GM12878 (cell line): ENCODE measurements at regions of chr11 and their contacts with region 1.

Region 1: DNA sequence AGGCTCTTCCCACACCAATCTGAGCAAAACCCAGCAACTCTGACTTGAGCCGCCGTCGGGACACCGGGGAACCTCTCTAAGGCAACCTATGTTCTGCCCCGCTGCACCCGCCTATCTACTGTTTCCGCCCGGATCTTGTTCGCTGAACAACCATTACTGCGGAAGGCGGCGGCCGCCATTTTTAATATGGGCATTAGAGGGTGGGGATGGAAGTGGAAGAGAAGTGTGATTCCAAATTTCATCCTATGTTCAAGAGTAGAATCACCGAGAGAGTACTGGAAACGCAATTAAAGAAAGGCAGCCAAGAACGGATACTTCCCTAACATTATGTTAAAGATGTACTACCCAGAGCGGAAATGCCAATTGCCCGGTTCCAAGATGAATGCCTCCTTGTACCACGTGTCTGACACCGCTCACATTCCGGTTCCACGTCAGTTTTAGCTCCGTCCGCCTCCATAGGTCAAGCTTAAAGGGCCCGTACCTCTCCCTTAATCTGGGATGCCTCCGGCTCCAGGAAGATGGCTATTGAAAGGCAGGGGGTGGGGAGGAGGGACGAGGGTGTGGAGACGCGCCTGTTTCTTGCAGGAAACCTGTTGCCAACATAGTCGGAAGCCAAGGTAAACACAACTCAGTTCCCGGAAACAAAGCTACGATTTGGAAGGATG is at the start of gene DPAGT1:
- DNase-seq: peak; percentile 92
- ATAC-seq: peak; percentile 91
- H3K4me3 ChIP-seq: peak within 1 kb of the TSS; percentile 97
- H3K27ac ChIP-seq: peak within 1 kb of the TSS; percentile 96
- H3K4me1 ChIP-seq: peaks cover 27% of the 10 kb centered on the region
- H3K27me3 ChIP-seq: no peaks in the 10 kb centered on the region
- CTCF ChIP-seq: no peak
- EP300 ChIP-seq: no peak
- POLR2A ChIP-seq: peak; percentile 59; the same call in 1 of the 2 replicates
- RAD21 ChIP-seq: no peak
- polyA plus RNA-seq, gene DPAGT1: 33.0 to 47.8 TPM

Region 2: DNA sequence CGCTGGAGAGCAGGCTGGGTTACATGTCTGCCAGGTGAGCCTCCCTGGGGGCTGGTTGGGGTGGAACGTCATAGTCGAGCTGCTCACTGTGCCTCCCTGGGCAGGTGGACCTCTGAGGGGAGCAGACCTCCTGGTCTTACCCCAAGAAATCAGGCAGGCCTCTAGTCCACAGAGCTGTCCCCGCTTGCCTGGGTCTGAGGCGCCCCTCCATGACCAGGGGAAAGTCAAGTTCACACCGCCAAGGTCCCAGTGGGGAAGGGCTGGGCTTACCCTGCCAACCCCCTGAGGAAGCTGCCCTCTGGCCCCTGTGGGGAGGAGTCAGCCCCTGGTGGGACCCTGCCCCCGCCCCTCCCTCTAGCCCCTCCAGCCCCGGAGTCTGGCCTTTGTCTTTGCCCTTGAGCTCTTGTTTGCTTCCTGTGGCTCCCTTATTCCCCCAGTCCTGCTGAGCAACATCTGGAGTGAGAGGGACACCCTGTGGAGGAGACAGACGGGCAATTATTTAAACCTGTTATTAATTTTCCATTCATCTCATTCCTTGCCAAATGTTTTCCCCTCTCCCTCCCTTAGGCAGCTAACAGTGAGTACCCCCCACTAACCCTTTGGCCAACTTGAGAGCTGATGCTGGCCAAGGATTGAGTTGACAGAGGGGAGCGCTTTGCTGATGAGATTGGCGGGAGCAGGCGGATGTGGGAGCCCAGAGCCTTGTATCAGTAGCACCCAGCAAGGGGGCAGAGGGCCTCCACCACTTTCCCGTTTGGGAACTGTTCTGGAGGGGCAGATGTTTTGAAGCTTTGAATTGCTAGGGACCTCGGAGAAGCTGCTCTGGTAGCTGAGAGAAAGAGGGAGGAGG is 1690.8 kb before region 1 on chr11:
- CTCF ChIA-PET with region 1: no interaction called
- POLR2A ChIA-PET with region 1: interaction called, 11 read pairs
- RAD21 ChIA-PET with region 1: no interaction called
- SMC1A ChIA-PET with region 1: no interaction called
- in situ Hi-C with region 1: no loop called
- intact Hi-C with region 1: no loop called
- DNase-seq: no peak
- ATAC-seq: no peak
- H3K4me3 ChIP-seq: no peak overlapping the region
- H3K27ac ChIP-seq: no peak overlapping the region
- H3K4me1 ChIP-seq: peaks cover 4% of the 10 kb centered on the region; the same call in 1 of the 2 replicates
- H3K27me3 ChIP-seq: no peaks in the 10 kb centered on the region
- CTCF ChIP-seq: no peak
- EP300 ChIP-seq: no peak
- POLR2A ChIP-seq: no peak
- RAD21 ChIP-seq: 0 out of 2 replicates have a peak, but pooled peaks have one; percentile 3

Region 3: GRCh38 chr11:118988280-118988679 is 113.6 kb before region 1 on chr11:
- CTCF ChIA-PET with region 1: no interaction called
- POLR2A ChIA-PET with region 1: no interaction called
- RAD21 ChIA-PET with region 1: no interaction called
- SMC1A ChIA-PET with region 1: no interaction called
- in situ Hi-C with region 1: no loop called
- intact Hi-C with region 1: no loop called
- DNase-seq: no peak
- ATAC-seq: no peak
- H3K4me3 ChIP-seq: no peak overlapping the region
- H3K27ac ChIP-seq: no peak overlapping the region
- H3K4me1 ChIP-seq: no peaks in the 10 kb centered on the region
- H3K27me3 ChIP-seq: no peaks in the 10 kb centered on the region; a peak in 1 of 4 replicates
- CTCF ChIP-seq: no peak
- EP300 ChIP-seq: no peak
- POLR2A ChIP-seq: no peak
- RAD21 ChIP-seq: no peak

Region 4: GRCh38 chr11:119018074-119018938 is 83.6 kb before region 1 on chr11 and contains the starts of genes RPS25 and TRAPPC4:
- CTCF ChIA-PET with region 1: no interaction called
- POLR2A ChIA-PET with region 1: interaction called, 4 read pairs
- RAD21 ChIA-PET with region 1: no interaction called
- SMC1A ChIA-PET with region 1: interaction called, 4 read pairs
- in situ Hi-C with region 1: no loop called
- intact Hi-C with region 1: loop called (anchors 5 kb)
- DNase-seq: peak; percentile 92
- ATAC-seq: peak; percentile 92
- H3K4me3 ChIP-seq: peak within 1 kb of the TSS; percentile 96
- H3K27ac ChIP-seq: peak within 1 kb of the TSS; percentile 82
- H3K4me1 ChIP-seq: no peaks in the 10 kb centered on the region; the same call in 1 of the 2 replicates
- H3K27me3 ChIP-seq: no peaks in the 10 kb centered on the region
- CTCF ChIP-seq: no peak
- EP300 ChIP-seq: no peak; a peak in 1 of 4 replicates
- POLR2A ChIP-seq: peak; percentile 95
- RAD21 ChIP-seq: no peak
- polyA plus RNA-seq, gene RPS25: 3,292 to 3,419 TPM
- polyA plus RNA-seq, gene TRAPPC4: 205 to 231 TPM

Region 5: DNA sequence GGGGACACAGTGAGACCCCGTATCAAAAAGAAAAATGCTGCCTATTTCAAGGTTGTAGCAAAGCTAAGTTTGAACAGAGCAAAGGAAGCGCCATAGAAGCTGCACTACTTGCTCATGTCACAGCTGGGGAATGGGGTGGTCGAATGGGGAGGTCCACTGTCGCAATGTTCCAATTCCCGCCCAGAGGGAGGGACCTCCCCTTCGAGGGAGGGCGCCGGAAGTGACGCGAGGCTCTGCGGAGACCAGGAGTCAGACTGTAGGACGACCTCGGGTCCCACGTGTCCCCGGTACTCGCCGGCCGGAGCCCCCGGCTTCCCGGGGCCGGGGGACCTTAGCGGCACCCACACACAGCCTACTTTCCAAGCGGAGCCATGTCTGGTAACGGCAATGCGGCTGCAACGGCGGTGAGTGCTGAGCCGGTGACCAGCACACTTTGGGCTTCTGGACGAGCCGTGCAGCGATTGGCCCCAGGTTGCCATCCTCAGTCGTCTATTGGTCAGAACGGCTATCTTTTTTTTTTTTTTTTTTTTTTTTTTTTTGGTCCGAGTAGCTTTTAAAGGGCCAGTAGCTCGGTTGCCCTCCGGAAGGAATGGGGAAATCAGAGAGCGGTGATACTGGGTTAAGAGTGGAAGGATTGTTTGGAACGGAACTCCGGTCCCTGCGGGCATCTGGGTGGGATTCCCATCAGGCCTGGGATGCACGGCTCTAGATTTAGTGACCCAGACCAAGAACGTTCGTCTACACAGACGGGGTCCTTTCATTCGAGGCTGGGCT is 17.0 kb before region 1 on chr11 and contains the start of gene HMBS:
- CTCF ChIA-PET with region 1: interaction called, 9 read pairs
- POLR2A ChIA-PET with region 1: interaction called, 69 read pairs
- RAD21 ChIA-PET with region 1: interaction called, 11 read pairs
- SMC1A ChIA-PET with region 1: interaction called, 7 read pairs
- in situ Hi-C with region 1: no loop called
- intact Hi-C with region 1: no loop called
- DNase-seq: peak; percentile 79
- ATAC-seq: peak; percentile 95
- H3K4me3 ChIP-seq: peak within 1 kb of the TSS; percentile 97
- H3K27ac ChIP-seq: peak within 1 kb of the TSS; percentile 94
- H3K4me1 ChIP-seq: peaks cover 10% of the 10 kb centered on the region
- H3K27me3 ChIP-seq: no peaks in the 10 kb centered on the region
- CTCF ChIP-seq: no peak
- EP300 ChIP-seq: peak in 1 of 2 experiments; percentile 12; a peak in 1 of 4 replicates
- POLR2A ChIP-seq: peak; percentile 89
- RAD21 ChIP-seq: no peak
- polyA plus RNA-seq, gene HMBS: 17.7 to 27.6 TPM

Region 6: GRCh38 chr11:119144825-119145486 is 43.1 kb after region 1 on chr11:
- CTCF ChIA-PET with region 1: interaction called, 4 read pairs
- POLR2A ChIA-PET with region 1: interaction called, 3 read pairs
- RAD21 ChIA-PET with region 1: no interaction called
- SMC1A ChIA-PET with region 1: no interaction called
- in situ Hi-C with region 1: no loop called
- intact Hi-C with region 1: loop called (anchors 1 kb)
- DNase-seq: no peak
- ATAC-seq: peak; percentile 97
- H3K4me3 ChIP-seq: no peak overlapping the region
- H3K27ac ChIP-seq: no peak overlapping the region
- H3K4me1 ChIP-seq: no peaks in the 10 kb centered on the region
- H3K27me3 ChIP-seq: peaks cover 2 to 10% of the 10 kb centered on the region in 2 experiments; a peak in 3 of 4 replicates
- CTCF ChIP-seq: peak; percentile 50 to 71 (median 67)
- EP300 ChIP-seq: no peak
- POLR2A ChIP-seq: no peak
- RAD21 ChIP-seq: peak; percentile 52

Region 7: DNA sequence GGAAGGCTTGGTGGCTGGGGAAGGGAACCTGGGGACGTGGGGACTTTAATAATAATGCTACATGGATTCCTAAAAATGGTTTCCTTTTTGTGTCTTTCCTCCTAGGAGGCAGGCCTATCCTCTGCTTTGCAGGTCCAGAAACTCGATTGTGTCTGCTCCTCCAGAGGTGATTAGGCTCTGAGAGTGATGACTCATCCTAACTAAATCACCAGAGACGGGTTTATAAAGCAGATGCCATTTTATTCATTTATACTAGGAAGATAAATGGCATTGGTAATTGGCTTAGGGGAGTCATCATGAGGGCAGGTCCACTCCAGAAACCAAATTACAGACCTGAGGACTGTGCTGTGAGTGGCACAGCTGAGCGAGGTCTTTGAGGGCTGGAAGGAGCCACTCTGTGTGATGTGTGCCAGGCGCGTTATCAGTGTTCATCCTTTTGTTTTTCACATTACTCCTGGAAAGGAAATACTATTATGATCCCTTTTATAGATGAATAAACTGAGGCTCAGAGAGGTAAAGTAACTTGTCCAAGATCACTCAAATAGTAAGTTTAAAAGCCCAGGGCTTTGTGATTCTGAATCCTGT is 73.7 kb after region 1 on chr11:
- CTCF ChIA-PET with region 1: no interaction called
- POLR2A ChIA-PET with region 1: no interaction called
- RAD21 ChIA-PET with region 1: no interaction called
- SMC1A ChIA-PET with region 1: no interaction called
- in situ Hi-C with region 1: no loop called
- intact Hi-C with region 1: no loop called
- DNase-seq: no peak
- ATAC-seq: no peak
- H3K4me3 ChIP-seq: no peak overlapping the region
- H3K27ac ChIP-seq: no peak overlapping the region
- H3K4me1 ChIP-seq: no peaks in the 10 kb centered on the region
- H3K27me3 ChIP-seq: no peaks in the 10 kb centered on the region; a peak in 1 of 4 replicates
- CTCF ChIP-seq: no peak
- EP300 ChIP-seq: no peak
- POLR2A ChIP-seq: no peak
- RAD21 ChIP-seq: no peak